Panc1 (cell line): ENCODE measurements at regions of chr1 and their contacts with region 1.

Region 1: DNA sequence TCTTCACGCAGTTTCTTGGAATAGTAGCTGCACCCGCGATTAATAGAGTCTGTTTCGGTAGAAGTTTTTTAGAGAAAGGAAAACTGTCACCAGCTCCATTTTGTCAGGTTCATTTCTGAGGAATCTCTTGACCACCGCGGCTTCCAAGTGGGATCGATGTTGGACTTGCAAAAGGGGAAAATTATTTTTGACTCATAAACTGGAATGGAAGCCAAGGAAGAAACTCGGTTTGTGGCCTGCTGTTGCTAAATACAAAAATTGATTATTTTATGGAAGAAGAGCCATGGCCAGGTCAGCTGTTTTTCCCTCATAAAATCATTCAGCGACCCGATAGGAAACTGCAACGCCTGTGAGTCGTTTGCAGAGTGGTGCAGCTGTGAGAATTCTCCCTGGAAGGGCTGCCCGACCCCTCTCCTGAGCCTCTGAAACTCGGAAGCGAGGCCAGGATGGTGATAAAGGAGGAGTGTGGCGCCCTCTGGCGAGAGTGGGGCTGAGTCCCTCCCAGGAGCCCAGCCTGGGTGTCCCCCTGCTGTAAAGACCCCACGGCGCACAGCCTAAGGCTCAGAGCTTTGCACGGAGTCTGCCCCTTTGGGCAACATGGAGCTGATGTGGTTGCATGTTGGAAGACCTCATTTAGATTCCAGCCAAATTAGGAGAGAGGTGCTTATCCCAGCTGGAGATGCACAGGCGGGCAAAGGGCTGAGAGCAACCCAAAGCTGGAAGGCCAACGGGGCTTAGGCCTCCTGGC is 83.6 kb upstream of the SLC25A33 start:
- DNase-seq: no peak
- ATAC-seq: peak; percentile 85
- H3K4me3 ChIP-seq: no peak overlapping the region
- H3K27ac ChIP-seq: peak overlapping the region; percentile 25
- H3K4me1 ChIP-seq: peaks cover 13% of the 10 kb centered on the region
- H3K27me3 ChIP-seq: no peaks in the 10 kb centered on the region
- CTCF ChIP-seq: peak; percentile 88

Region 2: DNA sequence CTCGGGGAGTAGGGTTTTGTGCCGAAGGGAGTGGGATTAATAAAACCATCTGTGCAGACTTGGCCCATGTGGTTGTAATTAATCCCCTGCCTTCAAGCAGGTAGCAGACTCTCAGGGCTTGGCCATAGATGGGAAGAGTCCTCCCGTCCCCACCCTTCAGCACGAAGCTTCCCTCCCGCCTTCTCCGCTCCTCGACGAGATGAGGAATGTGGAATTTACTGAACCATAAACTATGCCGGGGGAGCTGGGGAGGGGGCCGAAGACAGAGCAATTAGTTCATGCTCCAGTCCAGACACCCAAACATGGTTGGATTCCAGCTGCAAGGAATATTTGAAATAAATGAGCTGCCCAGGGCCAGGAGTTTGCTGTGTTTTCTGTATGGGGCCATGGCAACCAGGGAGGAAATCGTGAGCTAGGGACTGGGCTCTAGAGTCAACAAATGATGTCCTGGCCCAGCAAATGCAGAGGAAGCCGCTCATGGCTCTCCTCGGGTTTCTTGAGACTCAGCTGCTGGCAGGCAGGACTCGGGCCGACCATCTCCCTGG is 84.2 kb before region 1 on chr1:
- CTCF ChIA-PET with region 1: no interaction called
- POLR2A ChIA-PET with region 1: no interaction called
- in situ Hi-C with region 1: no loop called
- intact Hi-C with region 1: loop called (anchors 10 kb)
- DNase-seq: no peak
- ATAC-seq: peak; percentile 24; the same call in 1 of the 2 replicates
- H3K4me3 ChIP-seq: no peak overlapping the region
- H3K27ac ChIP-seq: peak overlapping the region; percentile 8; the same call in 1 of the 2 replicates
- H3K4me1 ChIP-seq: peaks cover 46% of the 10 kb centered on the region
- H3K27me3 ChIP-seq: no peaks in the 10 kb centered on the region
- CTCF ChIP-seq: no peak